Cardiac septum (tissue), 1 donor: ENCODE measurements at regions of chr3 and their contacts with region 1.

Region 1: GRCh38 chr3:43769471-43770425 is 79.0 kb downstream of the ABHD5 start:
- DNase-seq: peak; percentile 97

Region 2: GRCh38 chr3:43621656-43622432 is 147.9 kb before region 1 on chr3 and contains the start of gene ANO10:
- intact Hi-C with region 1: loop called (anchors 5 kb)
- DNase-seq: peak; percentile 100
- total RNA-seq, gene ANO10: 15.3 TPM

Region 3: GRCh38 chr3:43690400-43691119 is 79.2 kb before region 1 on chr3 and contains the start of gene ABHD5:
- intact Hi-C with region 1: loop called (anchors 2 kb)
- DNase-seq: peak; percentile 96
- total RNA-seq, gene ABHD5: 23.5 TPM

Region 4: GRCh38 chr3:43733459-43734384 is 36.0 kb before region 1 on chr3:
- intact Hi-C with region 1: loop called (anchors 5 kb)
- DNase-seq: no peak

Region 5: GRCh38 chr3:43759297-43759782 is 10.4 kb before region 1 on chr3:
- intact Hi-C with region 1: loop called (anchors 1 kb)
- DNase-seq: no peak

Region 6: GRCh38 chr3:43907508-43907858 is 137.7 kb after region 1 on chr3:
- intact Hi-C with region 1: no loop called
- DNase-seq: no peak

Region 7: GRCh38 chr3:44077246-44077645 is 307.5 kb after region 1 on chr3:
- intact Hi-C with region 1: loop called (anchors 10 kb)
- DNase-seq: no peak